ENCODE measurements at regions of chr15 and their contacts with region 1.

Region 1: DNA sequence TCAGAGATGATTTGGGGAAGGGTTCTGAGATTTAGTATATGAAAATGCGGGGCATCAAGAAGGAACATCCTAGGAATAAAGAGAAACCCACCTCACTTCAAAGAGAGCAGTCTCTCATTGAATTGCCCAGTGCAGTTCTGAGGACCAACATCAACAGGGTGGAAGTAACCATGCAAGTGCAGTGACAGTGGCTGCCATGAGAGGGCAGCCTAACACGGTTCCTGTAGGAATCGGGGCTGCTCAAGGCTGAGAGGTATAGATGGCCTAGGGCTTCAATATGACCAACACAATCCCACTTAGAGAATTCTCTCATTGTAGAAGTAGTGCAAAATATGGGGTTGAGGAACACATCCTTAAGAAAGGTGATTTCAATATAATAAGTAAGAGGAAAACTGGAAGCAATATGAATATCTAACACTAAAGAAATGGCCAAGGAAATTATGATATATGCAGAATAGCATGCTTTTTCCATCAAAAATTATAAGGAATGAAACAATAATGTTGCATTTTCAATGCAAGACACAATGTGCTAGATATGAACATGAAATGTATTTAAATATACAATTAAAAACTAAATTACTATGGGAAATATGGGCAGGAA is 51.1 kb upstream of the ARRDC4 start:
- DNase-seq: peak; percentile 29 to 94 (median 69)

Region 2: GRCh38 chr15:98085003-98085639 is 175.7 kb after region 1 on chr15:
- intact Hi-C with region 1: loop called (anchors 1 kb)
- DNase-seq: peak in 3 of 10 donors; percentile 21 to 32 (median 24)

Region 3: GRCh38 chr15:98177924-98178592 is 268.7 kb after region 1 on chr15:
- intact Hi-C with region 1: loop called (anchors 1 kb)
- DNase-seq: peak in 4 of 10 donors; percentile 19 to 44 (median 31)

Measured in posterior cingulate gyrus (tissue), 11 donors.